ENCODE measurements at regions of chr12 and their contacts with region 1.

Region 1: DNA sequence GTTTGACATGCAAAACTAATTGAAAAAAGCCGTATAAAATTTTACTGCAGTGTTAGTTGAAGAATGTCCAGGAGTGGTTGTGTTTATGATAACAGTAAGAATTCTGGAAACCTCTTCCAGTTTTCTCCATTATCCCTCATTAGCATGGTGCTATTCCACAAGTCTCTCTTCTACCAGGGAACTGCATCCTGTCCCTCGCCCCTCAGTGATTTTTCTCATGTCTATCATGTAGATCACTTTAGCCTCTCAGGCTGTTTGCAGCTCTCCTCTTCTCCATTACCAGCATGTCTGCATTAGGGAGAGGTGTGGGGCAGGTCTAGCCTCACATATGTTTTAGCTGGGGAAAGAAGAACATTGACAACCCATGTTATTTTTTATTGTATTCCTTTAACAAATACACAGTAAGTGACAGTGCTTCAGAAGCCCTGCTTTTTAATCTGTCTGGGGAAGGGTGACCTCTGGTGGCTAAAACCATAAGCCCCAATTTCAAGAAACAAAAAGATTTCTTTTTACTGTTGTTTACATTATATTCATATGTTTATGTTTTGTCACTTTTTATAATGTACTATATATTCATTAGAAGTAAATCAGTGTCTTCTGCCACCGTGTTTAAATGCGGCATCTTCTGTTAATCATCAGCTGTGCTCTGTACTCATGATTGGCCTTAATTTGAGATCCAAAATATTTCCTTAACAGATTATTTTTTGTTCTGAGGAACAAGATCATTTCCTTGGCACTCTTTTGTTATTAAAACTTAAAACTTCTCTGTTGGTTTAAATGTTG is 70.7 kb downstream of the RASSF8 start:
- DNase-seq: peak in 1 of 6 donors; percentile 22
- ATAC-seq: peak; percentile 58 to 84 (median 78)
- H3K4me3 ChIP-seq: no peak overlapping the region
- H3K27ac ChIP-seq: peak overlapping the region in 1 of 4 donors; percentile 40
- H3K4me1 ChIP-seq: peaks cover 0 to 25% (median 19%) of the 10 kb centered on the region in 3 donors
- H3K27me3 ChIP-seq: no peaks in the 10 kb centered on the region
- CTCF ChIP-seq: peak in 3 of 4 donors; percentile 54 to 73 (median 66)

Region 2: DNA sequence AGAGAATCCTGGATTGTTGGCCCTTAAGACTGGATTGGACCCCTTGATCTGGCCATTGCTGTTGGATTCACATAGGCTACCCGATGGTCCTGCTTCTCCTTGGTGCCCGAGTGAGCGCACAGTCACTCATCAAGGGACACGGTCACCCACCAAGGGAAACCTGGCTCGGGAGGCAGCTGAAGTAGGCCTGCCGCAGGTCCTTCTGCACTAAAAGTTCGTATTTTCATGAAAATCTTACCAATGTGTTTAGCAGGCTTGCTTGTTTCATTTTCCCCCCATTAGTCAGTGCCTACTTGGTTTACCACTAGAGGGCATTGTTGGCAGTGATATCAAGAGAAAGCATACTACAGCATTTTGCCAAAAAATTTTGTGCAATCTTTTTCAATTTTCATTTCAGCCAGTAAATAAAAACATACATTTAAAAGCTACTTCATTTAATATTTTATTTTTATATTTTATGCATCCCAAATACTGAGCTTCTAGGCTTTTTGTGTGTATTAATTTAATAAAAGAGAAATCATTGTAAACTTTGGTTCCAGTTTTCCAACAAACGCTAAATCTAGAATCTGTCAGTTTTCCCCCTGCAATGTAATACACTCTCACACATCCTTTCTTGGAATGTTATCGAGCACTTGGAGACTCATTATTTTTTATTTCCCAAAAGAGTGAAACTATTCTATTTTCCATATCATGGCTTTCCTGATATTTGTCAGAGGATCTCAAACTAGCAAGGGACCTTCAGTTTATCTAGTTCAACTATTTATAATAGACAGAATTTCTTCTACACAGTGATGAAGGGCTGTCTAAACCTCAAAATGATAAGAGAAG is 592.7 kb before region 1 on chr12:
- intact Hi-C with region 1: loop called in 2 of 3 experiments (anchors 10 kb)
- DNase-seq: peak in 2 of 6 donors; percentile 18 to 38
- ATAC-seq: peak; percentile 75 to 95 (median 91)
- H3K4me3 ChIP-seq: peak overlapping the region in 2 of 4 donors; percentile 28 to 31
- H3K27ac ChIP-seq: no peak overlapping the region
- H3K4me1 ChIP-seq: peaks cover 0 to 4% (median 0%) of the 10 kb centered on the region in 3 donors
- H3K27me3 ChIP-seq: no peaks in the 10 kb centered on the region
- CTCF ChIP-seq: peak; percentile 40 to 74 (median 58)

Region 3: DNA sequence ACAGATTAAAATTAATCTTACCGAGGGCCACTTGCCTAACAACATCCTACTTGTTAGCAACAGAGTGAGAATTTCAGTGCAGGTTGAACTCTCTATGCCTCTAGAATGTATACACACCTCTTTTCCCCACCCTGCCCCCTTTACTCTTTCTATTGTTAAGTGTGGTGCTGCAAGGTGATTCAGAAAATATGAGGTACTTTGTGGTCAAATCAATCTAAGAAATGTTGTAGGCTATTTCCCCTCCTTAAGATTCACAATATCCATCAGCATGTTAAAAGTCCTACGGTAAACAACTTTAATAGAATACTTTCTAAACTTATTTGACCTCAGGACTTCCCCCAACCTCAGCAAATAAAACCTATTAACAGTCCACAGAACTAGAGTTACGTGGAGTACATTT is 582.1 kb before region 1 on chr12:
- intact Hi-C with region 1: loop called in 1 of 3 experiments (anchors 10 kb)
- DNase-seq: no peak
- ATAC-seq: no peak
- H3K4me3 ChIP-seq: no peak overlapping the region
- H3K27ac ChIP-seq: no peak overlapping the region
- H3K4me1 ChIP-seq: no peaks in the 10 kb centered on the region
- H3K27me3 ChIP-seq: no peaks in the 10 kb centered on the region
- CTCF ChIP-seq: no peak

Region 4: GRCh38 chr12:26226629-26227360 is 197.7 kb after region 1 on chr12:
- intact Hi-C with region 1: no loop called
- DNase-seq: peak; percentile 26 to 70 (median 42)
- ATAC-seq: peak; percentile 74 to 89 (median 86)
- H3K4me3 ChIP-seq: peak overlapping the region; percentile 10 to 44 (median 21)
- H3K27ac ChIP-seq: peak overlapping the region in 3 of 4 donors; percentile 34 to 59 (median 39)
- H3K4me1 ChIP-seq: no peaks in the 10 kb centered on the region
- H3K27me3 ChIP-seq: no peaks in the 10 kb centered on the region
- CTCF ChIP-seq: no peak

Measured in pancreas (tissue), 10 donors.